Heart right ventricle (tissue), 16 donors: ENCODE measurements at regions of chr3 and their contacts with region 1.

Region 1: GRCh38 chr3:59709702-59710553 is 660.1 kb upstream of the CFAP20DC start:
- DNase-seq: peak; percentile 24 to 37
- ATAC-seq: peak; percentile 61 to 95 (median 79)
- H3K4me3 ChIP-seq: no peak overlapping the region
- H3K27ac ChIP-seq: no peak overlapping the region
- H3K4me1 ChIP-seq: peaks cover 0 to 16% (median 0%) of the 10 kb centered on the region in 9 donors
- H3K27me3 ChIP-seq: no peaks in the 10 kb centered on the region
- CTCF ChIP-seq: no peak

Region 2: DNA sequence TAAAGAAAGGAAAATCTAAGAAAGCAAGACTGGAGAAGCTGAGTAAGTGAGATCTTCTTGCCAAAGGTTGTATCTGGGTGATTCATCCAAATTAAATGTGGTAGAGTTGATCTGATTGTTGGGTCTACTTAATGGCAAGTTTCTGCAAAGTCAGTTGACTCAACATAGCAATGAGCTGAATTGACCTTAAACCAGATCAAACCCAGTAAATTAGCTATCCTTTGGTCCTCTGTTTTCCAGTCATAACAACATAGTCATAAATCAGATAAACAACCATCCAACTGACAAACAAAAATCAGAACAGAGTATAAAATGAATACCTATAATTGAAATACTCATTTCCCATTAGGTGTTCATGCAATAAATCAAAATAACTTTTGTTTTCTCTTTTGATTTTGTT is 517.5 kb before region 1 on chr3:
- intact Hi-C with region 1: no loop called
- DNase-seq: no peak
- ATAC-seq: no peak
- H3K4me3 ChIP-seq: no peak overlapping the region
- H3K27ac ChIP-seq: no peak overlapping the region
- H3K4me1 ChIP-seq: no peaks in the 10 kb centered on the region
- H3K27me3 ChIP-seq: no peaks in the 10 kb centered on the region
- CTCF ChIP-seq: no peak

Region 3: GRCh38 chr3:59820352-59820934 is 110.5 kb after region 1 on chr3:
- intact Hi-C with region 1: loop called in 1 of 10 experiments (anchors 10 kb)
- DNase-seq: no peak
- ATAC-seq: no peak
- H3K4me3 ChIP-seq: no peak overlapping the region
- H3K27ac ChIP-seq: no peak overlapping the region
- H3K4me1 ChIP-seq: peaks cover 0 to 21% (median 19%) of the 10 kb centered on the region in 9 donors
- H3K27me3 ChIP-seq: no peaks in the 10 kb centered on the region
- CTCF ChIP-seq: no peak